Activated CD4-positive, alpha-beta T cell treated with anti-CD3 and anti-CD28 coated beads, Interleukin-2, amount 10 ng/mL, durations not matched to agents 24 days and 14 days (primary cell): ENCODE measurements at regions of chr6 and their contacts with region 1.

Region 1: GRCh38 chr6:29942275-29943052 is at the start of gene HLA-A:
- DNase-seq: peak; percentile 97
- H3K4me3 Mint-ChIP-seq: peak within 1 kb of the TSS; percentile 95
- H3K27ac Mint-ChIP-seq: peak within 1 kb of the TSS; percentile 99
- H3K4me1 Mint-ChIP-seq: peaks cover 46% of the 10 kb centered on the region
- H3K27me3 Mint-ChIP-seq: no peaks in the 10 kb centered on the region
- total RNA-seq, gene HLA-A: 1,449 and 1,452 TPM in 2 replicates

Region 2: DNA sequence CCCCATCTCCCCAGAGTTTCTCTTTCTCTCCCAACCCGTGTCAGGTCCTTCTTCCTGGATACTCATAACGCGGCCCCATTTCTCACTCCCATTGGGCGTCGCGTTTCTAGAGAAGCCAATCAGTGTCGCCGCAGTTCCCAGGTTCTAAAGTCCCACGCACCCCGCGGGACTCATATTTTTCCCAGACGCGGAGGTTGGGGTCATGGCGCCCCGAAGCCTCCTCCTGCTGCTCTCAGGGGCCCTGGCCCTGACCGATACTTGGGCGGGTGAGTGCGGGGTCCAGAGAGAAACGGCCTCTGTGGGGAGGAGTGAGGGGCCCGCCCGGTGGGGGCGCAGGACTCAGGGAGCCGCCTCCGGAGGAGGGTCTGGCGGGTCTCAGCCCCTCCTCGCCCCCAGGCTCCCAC is 219.2 kb before region 1 on chr6 and contains the start of gene HLA-F:
- intact Hi-C with region 1: loop called (anchors 5 kb)
- DNase-seq: peak; percentile 96
- H3K4me3 Mint-ChIP-seq: peak within 1 kb of the TSS; percentile 98
- H3K27ac Mint-ChIP-seq: peak within 1 kb of the TSS; percentile 94
- H3K4me1 Mint-ChIP-seq: peaks cover 53% of the 10 kb centered on the region
- H3K27me3 Mint-ChIP-seq: no peaks in the 10 kb centered on the region
- total RNA-seq, gene HLA-F: 254 and 270 TPM in 2 replicates

Region 3: GRCh38 chr6:29887819-29888776 is 54.4 kb before region 1 on chr6:
- intact Hi-C with region 1: loop called (anchors 5 kb)
- DNase-seq: peak; percentile 95
- H3K4me3 Mint-ChIP-seq: peak overlapping the region; percentile 92
- H3K27ac Mint-ChIP-seq: peak overlapping the region; percentile 89
- H3K4me1 Mint-ChIP-seq: peaks cover 15% of the 10 kb centered on the region
- H3K27me3 Mint-ChIP-seq: peaks cover 25% of the 10 kb centered on the region

Region 4: GRCh38 chr6:30061092-30061857 is 118.8 kb after region 1 on chr6 and contains the start of gene POLR1H:
- intact Hi-C with region 1: loop called (anchors 2 kb)
- DNase-seq: peak; percentile 96
- H3K4me3 Mint-ChIP-seq: peak within 1 kb of the TSS; percentile 97
- H3K27ac Mint-ChIP-seq: peak within 1 kb of the TSS; percentile 99
- H3K4me1 Mint-ChIP-seq: peaks cover 27% of the 10 kb centered on the region
- H3K27me3 Mint-ChIP-seq: no peaks in the 10 kb centered on the region
- total RNA-seq, gene POLR1H: 85.6 and 87.0 TPM in 2 replicates